ENCODE measurements at regions of chr16 and their contacts with region 1.

Region 1: DNA sequence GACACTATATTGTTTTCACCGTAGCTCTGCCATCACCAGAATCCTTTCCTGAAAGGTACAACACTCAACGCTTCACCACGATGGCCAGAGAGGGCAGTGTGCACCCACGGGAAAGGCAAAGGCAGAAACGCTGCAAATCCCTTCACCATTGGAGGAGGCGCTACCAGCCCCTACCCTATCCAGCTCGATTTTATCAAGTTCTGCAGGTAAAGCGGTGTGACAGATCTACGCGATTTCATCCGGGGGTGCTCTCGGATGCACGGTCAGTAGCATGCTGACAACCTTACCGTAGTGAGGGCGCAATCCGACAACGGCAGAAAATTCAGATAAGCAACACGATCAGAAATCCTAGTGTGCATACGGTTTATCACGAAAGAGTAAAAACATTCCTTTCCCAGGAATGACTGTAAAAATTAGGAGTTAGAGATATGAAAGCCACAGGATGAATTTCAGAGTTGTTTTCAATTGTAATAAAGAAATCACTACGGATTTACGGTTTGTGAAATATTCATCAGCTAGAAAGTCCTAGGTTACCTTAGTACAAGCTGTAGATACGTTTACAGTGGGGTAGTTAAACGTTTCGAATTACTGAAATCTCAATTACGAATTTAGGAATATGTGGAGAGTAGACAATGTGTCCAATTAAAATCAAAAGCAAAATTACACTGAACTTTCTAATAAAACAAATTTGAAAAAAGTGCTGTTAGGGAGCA is 1.8 kb downstream of the NETO2 start:
- DNase-seq: peak; percentile 79 to 98 (median 90)

Region 2: DNA sequence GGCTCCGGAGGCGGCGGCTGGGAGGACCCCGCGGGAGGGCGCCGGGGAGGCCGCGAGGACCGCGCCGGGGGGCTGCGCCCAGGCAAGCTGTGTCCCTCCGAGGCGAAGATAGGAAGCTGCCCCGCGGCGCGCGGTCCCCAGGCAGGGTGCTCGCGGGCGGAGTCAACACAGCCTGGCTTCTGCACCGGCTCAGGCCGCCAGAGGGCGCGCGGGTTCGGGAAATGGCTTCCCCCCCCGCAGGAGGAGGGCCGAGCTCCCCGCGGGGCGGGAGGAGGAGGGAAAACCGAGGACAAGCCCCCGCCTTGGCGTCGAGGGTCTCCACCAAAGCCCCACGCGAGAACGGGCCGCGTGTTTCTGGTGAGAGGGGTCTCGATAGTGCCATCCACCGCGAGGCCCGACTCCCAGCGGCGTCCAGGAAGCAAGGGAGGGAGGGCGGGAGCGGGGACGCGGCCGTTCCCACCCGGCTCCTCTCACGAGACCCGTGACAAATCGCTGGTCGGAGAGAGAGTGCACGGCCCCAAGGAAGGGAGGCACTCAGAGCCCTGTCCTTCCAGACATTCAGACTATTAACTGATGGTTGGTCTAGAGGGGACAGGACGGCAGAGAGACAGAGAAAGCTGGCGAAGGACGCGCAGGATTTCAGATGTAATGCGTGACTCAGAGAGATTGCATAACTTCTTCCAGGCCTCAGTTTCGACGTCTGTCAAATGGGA is 104.0 kb before region 1 on chr16:
- intact Hi-C with region 1: loop called (anchors 5 kb)
- DNase-seq: peak; percentile 73 to 97 (median 91)

Region 3: GRCh38 chr16:47247690-47248089 is 105.8 kb after region 1 on chr16:
- intact Hi-C with region 1: no loop called
- DNase-seq: no peak

Region 4: DNA sequence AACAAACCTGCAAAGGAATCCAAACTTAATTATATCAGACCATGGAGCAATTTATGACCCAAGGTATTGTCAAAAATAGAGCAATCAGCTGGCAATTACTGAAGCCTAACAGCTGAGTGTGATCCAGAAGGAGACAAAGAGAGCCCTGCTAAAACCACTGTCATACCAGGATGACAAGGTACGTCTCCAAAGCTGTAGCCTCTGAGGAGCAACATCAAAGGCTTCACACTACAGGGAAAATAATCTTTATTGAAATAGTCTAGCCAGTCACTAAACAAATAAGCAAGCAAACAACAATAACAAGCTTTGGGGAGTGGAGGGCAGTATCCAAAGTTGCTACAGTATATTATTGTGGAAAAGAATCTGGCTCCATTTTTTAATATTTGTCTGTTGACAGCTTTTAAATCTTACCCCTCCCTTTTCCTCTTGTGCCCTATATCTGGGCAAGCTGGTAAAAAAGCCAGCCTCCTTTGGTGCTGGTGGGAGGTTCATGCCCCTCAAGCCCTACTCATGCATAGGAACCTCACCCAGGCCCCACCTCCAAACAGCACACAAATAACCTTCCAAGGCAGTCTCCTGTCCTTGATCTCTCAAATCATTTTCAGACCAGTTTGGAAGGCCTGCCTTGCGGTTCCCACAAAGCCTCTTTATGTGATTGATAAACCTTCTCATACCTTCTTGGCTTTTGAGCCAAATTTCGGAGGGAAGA is 245.3 kb after region 1 on chr16:
- intact Hi-C with region 1: no loop called
- DNase-seq: no peak

Region 5: DNA sequence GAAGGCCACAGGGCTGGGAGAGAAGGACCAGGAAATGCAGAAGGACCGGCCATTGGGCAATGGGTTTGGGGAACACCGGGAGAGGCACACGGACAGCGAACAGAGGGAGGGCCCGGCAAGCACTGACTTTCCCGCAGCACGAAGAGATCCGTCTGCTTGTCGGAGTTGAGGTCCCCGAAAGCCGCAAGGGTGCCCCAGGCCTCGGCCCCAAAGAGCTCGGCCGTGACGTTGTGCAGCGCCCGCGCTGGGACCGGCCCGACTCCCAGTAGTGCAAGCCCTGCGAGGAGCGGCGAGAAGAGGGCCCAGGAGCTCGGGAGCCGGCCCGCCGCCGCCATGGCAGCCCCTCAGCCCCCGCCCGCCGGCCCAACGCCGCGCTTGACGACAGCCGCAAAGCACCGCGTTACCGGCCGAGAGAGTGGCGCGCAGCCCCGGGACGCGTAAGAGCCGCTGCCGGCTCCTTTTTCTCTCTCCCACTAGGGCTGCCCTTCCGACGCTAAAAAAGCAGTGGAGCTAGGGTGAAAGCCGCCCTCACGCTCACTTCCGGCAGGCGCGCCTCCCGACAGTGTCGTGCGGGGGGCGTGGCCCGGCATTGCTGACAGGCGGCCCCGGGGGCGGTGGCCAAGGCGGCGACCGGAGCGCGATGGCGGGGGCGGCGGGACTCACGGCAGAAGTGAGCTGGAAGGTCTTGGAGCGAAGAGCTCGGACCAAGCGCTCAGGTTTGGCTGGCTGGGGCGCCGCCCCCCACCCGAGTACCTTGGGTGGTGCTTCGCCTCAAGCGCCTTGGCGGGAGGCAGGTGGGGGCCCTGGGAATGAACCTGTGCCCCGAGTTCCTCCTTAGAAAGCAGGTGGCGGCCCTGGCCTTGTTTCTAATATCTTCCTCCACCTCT is 319.0 kb after region 1 on chr16 and contains the starts of genes ITFG1 and PHKB:
- intact Hi-C with region 1: loop called (anchors 2 kb)
- DNase-seq: peak; percentile 84 to 98 (median 90)

Region 6: DNA sequence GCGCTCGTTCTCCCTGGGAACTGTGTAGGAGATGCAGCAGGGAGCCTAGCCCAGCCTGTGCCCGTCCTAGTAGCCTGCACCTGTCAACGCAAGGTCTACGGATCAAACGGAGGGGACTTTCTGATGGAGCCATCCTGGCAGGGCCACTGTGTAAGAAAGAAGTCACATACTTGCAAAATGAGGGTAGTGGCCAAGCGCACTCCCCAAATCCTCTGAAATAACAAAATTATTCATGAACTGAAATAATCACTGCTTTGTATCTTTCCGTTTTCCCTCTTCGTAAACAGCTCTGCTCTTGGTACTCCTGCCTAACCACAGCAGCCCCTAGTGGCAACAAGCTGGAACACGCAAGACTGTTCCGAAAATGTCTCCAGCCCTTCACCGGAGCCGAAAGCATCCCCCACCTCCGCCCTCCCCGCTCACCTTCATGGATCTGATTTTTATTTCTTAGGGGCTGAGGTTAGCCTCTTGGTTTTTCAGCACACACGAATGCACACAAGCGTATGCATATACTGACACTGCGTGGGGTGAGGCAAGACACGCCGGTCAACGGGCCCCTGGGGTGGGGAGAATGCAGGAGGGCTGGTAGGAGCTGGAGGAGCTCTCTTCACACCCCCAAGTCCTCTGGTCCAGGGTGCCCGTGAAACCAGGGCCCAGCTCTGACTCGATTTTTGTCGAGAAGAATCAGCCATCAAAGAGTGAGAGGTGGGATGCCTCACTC is 913.1 kb after region 1 on chr16:
- intact Hi-C with region 1: loop called (anchors 5 kb)
- DNase-seq: peak; percentile 45 to 94 (median 72)

Region 7: GRCh38 chr16:48156790-48157209 is 1014.9 kb after region 1 on chr16:
- intact Hi-C with region 1: loop called (anchors 2 kb)
- DNase-seq: peak; percentile 76 to 98 (median 89)